WTC11 (cell line): ENCODE measurements at regions of chr19 and their contacts with region 1.

Region 1: GRCh38 chr19:8005534-8006256 is at the start of gene ELAVL1:
- DNase-seq: peak; percentile 90
- ATAC-seq: peak; percentile 72
- H3K4me3 Mint-ChIP-seq: peak within 1 kb of the TSS; percentile 98
- H3K27ac Mint-ChIP-seq: peak within 1 kb of the TSS; percentile 97
- H3K4me1 Mint-ChIP-seq: peaks cover 31% of the 10 kb centered on the region
- H3K27me3 Mint-ChIP-seq: no peaks in the 10 kb centered on the region
- CTCF ChIP-seq: no peak
- total RNA-seq, gene ELAVL1: 144 to 160 TPM (median 149 TPM) in 3 replicates

Region 2: GRCh38 chr19:7928736-7929701 is 76.7 kb before region 1 on chr19:
- CTCF ChIA-PET with region 1: interaction called, 11 read pairs
- POLR2A ChIA-PET with region 1: interaction called, 5 read pairs
- DNase-seq: peak; percentile 84
- ATAC-seq: peak; percentile 63
- H3K4me3 Mint-ChIP-seq: no peak overlapping the region
- H3K27ac Mint-ChIP-seq: peak overlapping the region; percentile 70; the same call in 1 of the 2 replicates
- H3K4me1 Mint-ChIP-seq: peaks cover 4% of the 10 kb centered on the region; the same call in 1 of the 2 replicates
- H3K27me3 Mint-ChIP-seq: no peaks in the 10 kb centered on the region
- CTCF ChIP-seq: peak; percentile 71

Region 3: DNA sequence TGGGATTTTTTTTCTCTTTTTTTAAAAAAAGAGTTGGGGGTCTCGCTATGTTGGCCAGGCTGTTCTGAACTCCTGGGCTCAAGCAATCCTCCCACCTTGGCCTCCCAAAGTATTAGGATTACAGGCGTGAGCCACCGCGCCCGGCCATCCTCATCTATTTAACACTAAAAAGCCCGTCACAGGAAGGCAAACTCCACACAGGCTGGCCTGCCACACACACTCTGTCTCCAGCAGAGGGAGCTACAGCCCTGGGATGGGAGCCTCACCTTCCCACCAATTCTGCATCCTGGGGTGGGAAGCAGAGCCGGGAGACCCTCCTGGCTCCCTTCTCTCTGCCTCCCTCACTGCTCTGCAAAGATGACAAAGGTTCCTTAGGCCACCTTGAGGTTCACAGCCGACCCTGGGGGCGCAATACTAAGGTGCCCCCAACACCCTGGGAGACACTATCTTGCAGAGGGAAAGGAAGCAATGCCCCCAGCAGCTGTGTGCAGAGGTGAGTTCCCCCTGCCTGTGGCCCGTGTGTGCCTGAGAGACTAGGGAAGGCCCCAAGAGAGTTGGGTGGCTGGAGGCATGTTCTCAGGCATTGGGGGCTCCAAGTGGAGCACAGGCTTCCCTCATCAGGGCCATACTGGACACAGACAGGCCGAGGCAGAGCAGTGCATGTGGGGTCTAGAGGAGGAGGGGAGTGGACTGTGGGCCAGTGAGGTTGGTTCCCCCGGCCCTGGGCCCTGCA is 34.8 kb before region 1 on chr19:
- CTCF ChIA-PET with region 1: interaction called, 64 read pairs
- POLR2A ChIA-PET with region 1: interaction called, 3 read pairs
- DNase-seq: peak; percentile 85
- ATAC-seq: peak; percentile 81
- H3K4me3 Mint-ChIP-seq: no peak overlapping the region
- H3K27ac Mint-ChIP-seq: peak overlapping the region; percentile 80
- H3K4me1 Mint-ChIP-seq: peaks cover 24% of the 10 kb centered on the region
- H3K27me3 Mint-ChIP-seq: no peaks in the 10 kb centered on the region
- CTCF ChIP-seq: peak; percentile 76

Region 4: DNA sequence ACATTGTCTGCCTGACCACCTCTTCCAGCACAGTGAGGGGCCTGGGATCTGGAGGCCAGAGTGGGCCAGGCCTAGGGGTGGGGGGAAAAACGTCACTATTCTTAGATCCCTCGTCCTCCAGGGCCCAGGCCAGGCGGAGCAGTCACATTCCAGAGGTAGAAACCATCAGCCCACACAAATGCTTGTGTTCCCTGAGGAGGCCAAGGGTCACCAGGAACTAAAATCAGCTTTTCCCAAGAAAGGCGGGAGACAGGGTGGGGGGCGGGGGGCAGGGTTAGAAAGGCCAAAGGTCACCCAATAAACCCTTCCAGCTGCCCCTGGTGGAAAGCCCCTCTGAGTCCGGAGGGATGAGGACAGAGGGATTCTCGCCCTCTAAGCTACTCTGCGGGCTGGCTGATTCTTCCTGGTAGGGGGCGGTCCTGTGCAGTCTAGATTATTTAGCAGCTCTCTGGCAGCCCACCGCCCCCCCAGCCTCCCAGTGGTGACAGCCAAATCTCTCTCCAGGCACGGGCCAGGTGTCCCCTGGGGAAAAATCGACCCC is 23.3 kb after region 1 on chr19:
- CTCF ChIA-PET with region 1: interaction called, 31 read pairs
- POLR2A ChIA-PET with region 1: interaction called, 4 read pairs
- DNase-seq: peak; percentile 63
- ATAC-seq: peak; percentile 69
- H3K4me3 Mint-ChIP-seq: no peak overlapping the region
- H3K27ac Mint-ChIP-seq: no peak overlapping the region; the same call in 1 of the 2 replicates
- H3K4me1 Mint-ChIP-seq: peaks cover 17% of the 10 kb centered on the region
- H3K27me3 Mint-ChIP-seq: no peaks in the 10 kb centered on the region
- CTCF ChIP-seq: no peak

Region 5: DNA sequence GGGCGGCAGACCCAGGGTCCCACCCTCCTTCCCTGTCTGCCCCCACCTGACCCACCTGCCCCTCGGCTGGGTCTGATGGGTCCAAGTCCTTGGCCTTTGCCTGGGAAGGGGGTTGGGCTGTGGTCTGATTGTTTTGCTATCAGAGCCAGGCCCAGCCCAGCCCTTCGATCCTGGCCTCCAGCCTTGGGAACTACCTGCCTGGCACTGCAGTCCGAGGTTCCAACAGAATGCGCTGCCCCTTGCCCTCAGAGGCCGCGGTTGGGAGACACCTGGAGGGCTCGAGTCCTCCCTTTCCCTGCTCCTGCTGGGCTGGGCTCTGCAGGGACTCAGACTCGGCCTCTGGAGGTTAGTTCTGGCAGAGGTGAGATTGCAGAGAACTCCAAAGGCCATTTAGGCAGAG is 48.5 kb after region 1 on chr19:
- CTCF ChIA-PET with region 1: interaction called, 22 read pairs
- POLR2A ChIA-PET with region 1: no interaction called
- DNase-seq: no peak
- ATAC-seq: no peak
- H3K4me3 Mint-ChIP-seq: no peak overlapping the region
- H3K27ac Mint-ChIP-seq: no peak overlapping the region
- H3K4me1 Mint-ChIP-seq: peaks cover 17% of the 10 kb centered on the region
- H3K27me3 Mint-ChIP-seq: peaks cover 23% of the 10 kb centered on the region
- CTCF ChIP-seq: no peak

Region 6: DNA sequence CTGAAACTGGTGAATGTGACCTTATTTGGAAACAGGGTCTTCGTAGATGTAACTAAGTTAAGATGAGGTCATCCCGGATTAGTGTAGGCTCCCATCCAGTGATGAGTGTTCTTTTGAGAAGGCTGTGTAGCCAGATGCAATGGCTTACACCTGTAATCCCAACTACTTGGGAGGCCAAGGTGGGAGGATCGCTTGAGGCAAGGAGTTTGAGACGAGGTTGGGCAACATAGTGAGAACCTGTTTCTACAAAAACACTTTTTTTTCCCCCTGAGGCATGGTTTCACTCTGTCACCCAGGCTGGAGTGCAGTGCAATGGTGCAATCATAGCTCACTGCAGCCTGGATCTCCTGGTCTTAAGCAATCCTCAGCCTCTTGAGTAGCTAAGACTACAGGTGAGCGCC is 107.3 kb after region 1 on chr19:
- CTCF ChIA-PET with region 1: interaction called, 10 read pairs
- POLR2A ChIA-PET with region 1: no interaction called
- DNase-seq: no peak
- ATAC-seq: no peak; the same call in 1 of the 2 replicates
- H3K4me3 Mint-ChIP-seq: no peak overlapping the region
- H3K27ac Mint-ChIP-seq: peak overlapping the region; percentile 80
- H3K4me1 Mint-ChIP-seq: no peaks in the 10 kb centered on the region
- H3K27me3 Mint-ChIP-seq: no peaks in the 10 kb centered on the region
- CTCF ChIP-seq: no peak

Region 7: GRCh38 chr19:8530061-8530679 is 524.5 kb after region 1 on chr19:
- CTCF ChIA-PET with region 1: no interaction called
- POLR2A ChIA-PET with region 1: no interaction called
- DNase-seq: no peak
- ATAC-seq: no peak
- H3K4me3 Mint-ChIP-seq: no peak overlapping the region
- H3K27ac Mint-ChIP-seq: no peak overlapping the region
- H3K4me1 Mint-ChIP-seq: peaks cover 16% of the 10 kb centered on the region
- H3K27me3 Mint-ChIP-seq: peaks cover 6% of the 10 kb centered on the region
- CTCF ChIP-seq: no peak